CD8-positive, alpha-beta memory T cell (primary cell): ENCODE measurements at regions of chr7 and their contacts with region 1.

Region 1: GRCh38 chr7:27160546-27161213 is 4.2 kb upstream of the HOXA7 start:
- DNase-seq: peak; percentile 77 to 89 (median 79)
- H3K4me3 ChIP-seq: peak overlapping the region; percentile 72
- H3K4me3 Mint-ChIP-seq: peak overlapping the region; percentile 78 to 91 (median 82)
- H3K27ac ChIP-seq: no peak overlapping the region
- H3K27ac Mint-ChIP-seq: peak overlapping the region in 3 of 8 donors; percentile 43 to 75 (median 47)
- H3K4me1 ChIP-seq: peaks cover 30% of the 10 kb centered on the region
- H3K4me1 Mint-ChIP-seq: peaks cover 27 to 46% (median 36%) of the 10 kb centered on the region in 3 donors
- H3K27me3 ChIP-seq: peaks cover 81% of the 10 kb centered on the region
- H3K27me3 Mint-ChIP-seq: peaks cover 84 to 87% of the 10 kb centered on the region in 2 donors

Region 2: GRCh38 chr7:26365077-26365900 is 795.4 kb before region 1 on chr7:
- CTCF ChIA-PET with region 1: interaction called, 32 read pairs
- POLR2A ChIA-PET with region 1: no interaction called
- DNase-seq: peak in 4 of 5 donors; percentile 12 to 62 (median 58)
- H3K4me3 ChIP-seq: no peak overlapping the region
- H3K4me3 Mint-ChIP-seq: no peak overlapping the region
- H3K27ac ChIP-seq: no peak overlapping the region
- H3K27ac Mint-ChIP-seq: peak overlapping the region in 3 of 8 donors; percentile 52 to 92 (median 79)
- H3K4me1 ChIP-seq: peaks cover 7% of the 10 kb centered on the region
- H3K4me1 Mint-ChIP-seq: peaks cover 7 to 12% (median 8%) of the 10 kb centered on the region in 3 donors
- H3K27me3 ChIP-seq: no peaks in the 10 kb centered on the region
- H3K27me3 Mint-ChIP-seq: no peaks in the 10 kb centered on the region

Region 3: GRCh38 chr7:26686448-26686981 is 474.2 kb before region 1 on chr7:
- CTCF ChIA-PET with region 1: interaction called, 20 read pairs
- POLR2A ChIA-PET with region 1: no interaction called
- DNase-seq: peak in 2 of 5 donors; percentile 23 to 36
- H3K4me3 ChIP-seq: no peak overlapping the region
- H3K4me3 Mint-ChIP-seq: no peak overlapping the region
- H3K27ac ChIP-seq: no peak overlapping the region
- H3K27ac Mint-ChIP-seq: no peak overlapping the region
- H3K4me1 ChIP-seq: no peaks in the 10 kb centered on the region
- H3K4me1 Mint-ChIP-seq: peaks cover 0 to 2% (median 0%) of the 10 kb centered on the region in 3 donors
- H3K27me3 ChIP-seq: no peaks in the 10 kb centered on the region
- H3K27me3 Mint-ChIP-seq: peaks cover 0 to 16% of the 10 kb centered on the region in 2 donors

Region 4: DNA sequence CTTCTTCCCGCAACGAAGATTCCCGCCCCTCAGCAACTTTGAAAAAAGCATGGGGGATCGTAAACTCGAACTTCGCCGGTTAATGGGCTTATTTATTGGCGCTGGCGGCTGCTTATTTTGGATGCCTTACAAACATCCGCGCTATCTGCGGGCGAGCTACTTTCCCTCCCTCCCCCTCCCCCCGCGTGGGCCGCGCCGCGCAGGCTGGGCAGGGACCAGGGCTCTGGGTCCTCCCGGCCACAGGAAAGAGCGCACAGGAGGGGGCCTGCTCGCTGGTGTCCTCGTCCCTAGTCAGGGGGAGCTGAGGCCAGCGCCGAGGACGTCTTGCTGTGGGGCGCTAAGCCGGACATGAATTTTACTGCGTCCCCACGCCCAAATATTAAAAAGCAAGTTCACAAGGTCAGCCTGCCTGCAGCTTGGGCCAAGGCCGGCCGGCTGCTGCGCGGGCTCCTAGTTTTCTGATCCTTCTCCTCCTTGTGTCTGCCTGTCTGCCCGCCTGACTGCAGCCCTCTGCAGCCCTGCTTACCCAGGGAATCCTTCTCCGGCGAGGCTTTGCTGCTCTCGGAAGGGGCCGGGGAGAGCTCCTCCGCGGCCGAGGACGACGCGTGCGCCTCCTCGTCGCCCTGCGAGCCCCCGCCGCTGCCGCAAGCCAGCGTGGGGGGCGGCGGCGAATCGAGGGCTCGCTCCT is 12.3 kb after region 1 on chr7:
- CTCF ChIA-PET with region 1: interaction called, 31 read pairs
- POLR2A ChIA-PET with region 1: no interaction called
- DNase-seq: peak in 1 of 5 donors; percentile 46
- H3K4me3 ChIP-seq: peak overlapping the region; percentile 22
- H3K4me3 Mint-ChIP-seq: peak overlapping the region in 6 of 7 donors; percentile 56 to 86 (median 74)
- H3K27ac ChIP-seq: no peak overlapping the region
- H3K27ac Mint-ChIP-seq: peak overlapping the region in 2 of 8 donors; percentile 60 to 82
- H3K4me1 ChIP-seq: peaks cover 31% of the 10 kb centered on the region
- H3K4me1 Mint-ChIP-seq: peaks cover 19 to 33% (median 22%) of the 10 kb centered on the region in 3 donors
- H3K27me3 ChIP-seq: peaks cover 67% of the 10 kb centered on the region
- H3K27me3 Mint-ChIP-seq: peaks cover 63 to 74% of the 10 kb centered on the region in 2 donors

Region 5: DNA sequence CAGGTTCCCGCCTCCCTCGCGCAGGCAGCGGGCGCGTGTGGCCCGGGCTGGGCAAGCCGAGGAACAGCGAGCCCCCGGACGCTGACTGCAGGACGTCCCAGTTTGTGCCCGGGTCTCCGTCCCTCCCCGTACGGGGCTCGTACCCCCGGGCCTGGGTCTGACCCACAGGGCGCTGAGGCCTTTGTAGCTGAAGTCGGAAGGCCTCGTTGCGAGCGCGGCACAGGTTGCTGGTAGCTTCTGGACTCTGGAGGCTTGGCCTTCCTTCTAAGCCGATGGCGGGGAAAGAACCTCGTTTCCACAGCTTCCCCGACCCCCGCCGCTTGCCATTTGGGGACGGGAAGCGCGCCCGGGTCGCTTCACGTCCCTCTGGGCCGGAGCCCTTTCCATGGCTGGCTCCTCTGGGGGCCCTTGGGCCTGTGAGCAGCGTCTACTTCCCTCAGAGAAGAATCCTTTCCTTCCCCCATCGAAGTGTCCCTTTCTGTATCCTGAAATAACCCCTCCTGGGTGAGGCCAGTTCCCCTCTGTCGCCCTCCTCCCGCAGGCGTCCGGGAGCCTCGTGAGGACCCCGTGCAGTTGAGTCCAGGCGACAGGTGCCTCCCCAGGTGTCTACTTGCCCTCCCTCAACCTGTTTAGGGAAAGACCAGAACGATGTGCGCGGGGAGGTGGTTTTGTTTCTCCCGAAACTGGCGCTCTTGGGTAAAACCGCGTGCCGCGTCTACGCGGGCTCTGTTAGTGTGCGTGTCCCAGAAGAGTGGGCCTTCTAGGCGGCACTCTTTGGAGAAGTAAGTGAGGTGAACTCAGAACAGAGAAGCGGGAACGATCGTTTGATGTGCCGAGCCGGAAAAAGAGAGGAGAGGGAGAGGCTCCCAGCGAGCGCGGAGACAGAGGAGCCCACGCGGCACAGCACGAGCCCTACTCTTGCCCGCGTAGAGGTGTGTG is 91.2 kb after region 1 on chr7:
- CTCF ChIA-PET with region 1: no interaction called
- POLR2A ChIA-PET with region 1: no interaction called
- DNase-seq: no peak
- H3K4me3 ChIP-seq: no peak overlapping the region
- H3K4me3 Mint-ChIP-seq: no peak overlapping the region
- H3K27ac ChIP-seq: no peak overlapping the region
- H3K27ac Mint-ChIP-seq: no peak overlapping the region
- H3K4me1 ChIP-seq: no peaks in the 10 kb centered on the region
- H3K4me1 Mint-ChIP-seq: peaks cover 8 to 35% (median 11%) of the 10 kb centered on the region in 3 donors
- H3K27me3 ChIP-seq: peaks cover 41% of the 10 kb centered on the region
- H3K27me3 Mint-ChIP-seq: peaks cover 71 to 78% of the 10 kb centered on the region in 2 donors